Heart right ventricle (tissue), 16 donors: ENCODE measurements at regions of chr9 and their contacts with region 1.

Region 1: DNA sequence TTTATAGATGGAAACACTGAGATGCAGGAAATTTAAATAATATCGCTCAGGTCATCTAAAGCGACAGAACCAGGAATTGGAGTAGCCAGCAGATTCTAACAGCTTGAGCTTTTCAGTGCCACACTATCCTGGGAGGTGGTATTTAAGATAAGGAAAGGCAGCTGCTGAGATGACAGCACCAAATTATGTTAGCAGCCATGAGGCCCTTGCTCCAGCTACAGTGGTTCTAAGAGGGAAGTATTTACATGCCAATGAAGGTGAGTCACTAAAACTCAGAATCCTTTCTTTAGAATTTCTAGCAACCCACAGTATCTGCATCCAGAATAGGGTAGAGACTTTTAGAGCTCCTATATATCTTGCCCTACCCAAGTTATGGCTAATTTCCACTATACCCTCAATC is 127.0 kb upstream of the VLDLR start:
- DNase-seq: no peak
- ATAC-seq: peak in 2 of 8 donors; percentile 27 to 57
- H3K4me3 ChIP-seq: no peak overlapping the region
- H3K27ac ChIP-seq: peak overlapping the region in 7 of 10 donors; percentile 5 to 84 (median 64)
- H3K4me1 ChIP-seq: peaks cover 2 to 65% (median 29%) of the 10 kb centered on the region in 9 donors
- H3K27me3 ChIP-seq: no peaks in the 10 kb centered on the region
- CTCF ChIP-seq: no peak

Region 2: DNA sequence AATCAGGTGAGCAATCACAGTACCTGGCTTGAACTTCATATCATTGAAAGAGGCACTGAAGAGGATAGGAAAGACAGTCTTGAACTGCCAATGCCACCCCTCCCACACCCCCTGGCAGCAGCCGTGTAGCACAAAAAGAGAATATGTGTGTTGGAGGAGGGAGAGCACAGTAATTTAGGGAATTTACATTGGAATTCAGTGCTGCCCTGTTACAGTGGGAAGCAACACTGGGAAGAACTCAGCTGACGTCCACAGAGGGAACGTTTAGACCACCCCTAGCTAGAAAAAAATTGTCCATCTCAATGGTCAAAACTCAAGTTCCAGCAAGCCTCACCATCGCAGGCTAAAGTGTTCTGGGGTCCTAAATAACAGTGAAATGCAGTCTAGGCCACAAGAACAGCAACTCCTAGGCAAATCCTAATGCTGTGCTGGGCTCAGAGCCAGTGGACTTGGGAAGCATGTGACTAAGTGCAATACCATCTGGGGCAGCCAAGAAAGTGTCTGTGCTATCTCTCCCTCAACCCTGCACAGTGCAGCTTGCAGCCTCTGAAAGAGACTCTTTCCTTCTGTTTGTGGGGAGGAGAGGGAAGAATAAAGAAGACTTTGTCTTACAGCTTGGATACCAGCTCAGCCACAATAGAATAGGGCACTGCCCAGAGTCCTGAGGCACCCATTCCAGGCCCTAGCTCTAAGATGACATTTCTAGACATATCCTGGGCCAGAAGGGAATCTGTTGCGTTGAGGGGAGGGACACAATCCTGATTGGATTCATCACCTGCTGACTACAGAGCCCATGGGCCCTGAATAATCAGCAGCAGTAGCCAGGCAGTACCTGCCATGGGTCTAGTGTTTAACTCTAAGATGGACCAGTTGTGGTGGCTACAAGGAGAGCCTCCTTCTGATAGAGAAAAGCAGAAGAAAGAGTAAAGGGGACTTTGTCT is 64.9 kb after region 1 on chr9:
- intact Hi-C with region 1: loop called in 4 of 10 experiments (anchors 5 to 10 kb)
- DNase-seq: peak; percentile 71 to 92
- ATAC-seq: peak; percentile 98 to 100 (median 99)
- H3K4me3 ChIP-seq: no peak overlapping the region
- H3K27ac ChIP-seq: peak overlapping the region; percentile 68 to 94 (median 86)
- H3K4me1 ChIP-seq: peaks cover 7 to 30% (median 25%) of the 10 kb centered on the region in 9 donors
- H3K27me3 ChIP-seq: no peaks in the 10 kb centered on the region
- CTCF ChIP-seq: no peak